WTC11 (cell line): ENCODE measurements at regions of chr5 and their contacts with region 1.

Region 1: GRCh38 chr5:923281-923873 is 30.7 kb downstream of the TRIP13 start:
- DNase-seq: peak; percentile 90
- ATAC-seq: peak; percentile 89
- H3K4me3 Mint-ChIP-seq: no peak overlapping the region
- H3K27ac Mint-ChIP-seq: no peak overlapping the region
- H3K4me1 Mint-ChIP-seq: peaks cover 5% of the 10 kb centered on the region; the same call in 1 of the 2 replicates
- H3K27me3 Mint-ChIP-seq: peaks cover 26% of the 10 kb centered on the region
- CTCF ChIP-seq: peak; percentile 75

Region 2: GRCh38 chr5:252546-252945 is 670.8 kb before region 1 on chr5:
- CTCF ChIA-PET with region 1: no interaction called
- POLR2A ChIA-PET with region 1: no interaction called
- DNase-seq: no peak
- ATAC-seq: no peak
- H3K4me3 Mint-ChIP-seq: no peak overlapping the region
- H3K27ac Mint-ChIP-seq: no peak overlapping the region
- H3K4me1 Mint-ChIP-seq: no peaks in the 10 kb centered on the region
- H3K27me3 Mint-ChIP-seq: no peaks in the 10 kb centered on the region
- CTCF ChIP-seq: no peak

Region 3: DNA sequence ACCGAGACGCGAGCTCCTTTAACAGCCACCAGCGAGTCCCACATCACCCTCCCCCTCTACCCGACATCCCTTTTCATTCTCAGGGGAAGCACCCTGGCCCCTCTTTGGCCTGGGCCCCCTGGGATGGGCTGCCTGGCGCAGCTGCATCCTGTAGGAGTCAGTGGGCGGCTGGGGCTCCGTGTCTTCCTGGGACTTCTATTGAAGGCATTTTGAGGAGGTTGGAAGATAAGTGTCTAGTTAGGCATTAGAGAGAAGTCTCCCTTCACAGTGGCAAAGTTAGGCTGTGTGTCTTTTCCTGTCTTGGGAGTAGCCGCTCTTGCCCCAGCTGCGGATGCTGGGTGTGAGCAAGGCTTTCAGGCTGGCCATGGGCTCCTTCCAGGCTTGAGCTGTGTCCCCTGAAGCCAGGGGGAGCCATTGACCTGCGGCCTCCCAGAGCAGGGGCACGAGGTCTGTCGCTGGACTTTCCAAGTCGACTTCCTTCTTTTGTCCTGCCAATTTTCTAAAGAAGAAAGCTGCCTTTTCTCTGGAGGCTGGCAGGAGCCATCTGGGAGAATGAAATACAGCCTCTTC is 66.7 kb after region 1 on chr5:
- CTCF ChIA-PET with region 1: interaction called, 14 read pairs
- POLR2A ChIA-PET with region 1: no interaction called
- DNase-seq: peak; percentile 62
- ATAC-seq: peak; percentile 88
- H3K4me3 Mint-ChIP-seq: no peak overlapping the region
- H3K27ac Mint-ChIP-seq: no peak overlapping the region
- H3K4me1 Mint-ChIP-seq: peaks cover 5% of the 10 kb centered on the region
- H3K27me3 Mint-ChIP-seq: peaks cover 6% of the 10 kb centered on the region
- CTCF ChIP-seq: no peak

Region 4: DNA sequence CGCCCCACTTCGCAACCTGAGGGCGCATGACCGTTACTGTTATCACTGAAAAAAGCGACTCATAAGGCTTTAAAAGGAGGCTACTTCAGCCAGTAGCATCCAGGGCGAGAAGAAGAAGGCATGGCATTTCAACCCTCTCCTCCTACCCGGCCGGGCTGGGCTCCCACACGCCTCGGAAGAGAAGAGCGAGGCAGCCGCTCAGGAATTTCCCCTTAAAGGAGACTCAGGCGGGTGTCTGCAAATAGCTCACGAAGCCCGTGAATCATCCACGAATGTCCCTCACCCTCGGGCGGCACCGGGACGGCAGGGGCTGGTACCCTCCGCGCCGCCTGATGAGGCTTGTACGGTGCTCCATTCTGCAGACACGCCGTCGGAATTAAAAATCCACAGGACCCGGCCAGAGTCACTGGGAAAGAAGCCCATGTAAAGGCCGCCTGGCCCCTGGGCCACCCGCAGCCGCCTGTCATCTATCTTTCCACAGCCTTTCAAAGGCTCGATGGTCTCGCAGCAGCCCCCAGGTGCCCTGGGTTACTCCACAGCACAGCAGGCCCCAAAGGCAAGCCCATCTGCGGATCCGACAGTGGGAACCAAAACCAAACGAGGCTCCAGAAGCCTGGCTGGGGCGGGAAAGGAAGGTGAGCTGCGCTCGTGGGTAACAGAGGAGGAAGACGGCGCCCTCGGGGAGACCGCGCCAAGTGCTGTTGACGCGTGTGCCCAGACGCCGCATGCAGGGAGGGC is 176.7 kb after region 1 on chr5:
- CTCF ChIA-PET with region 1: no interaction called
- POLR2A ChIA-PET with region 1: no interaction called
- DNase-seq: no peak
- ATAC-seq: no peak
- H3K4me3 Mint-ChIP-seq: no peak overlapping the region
- H3K27ac Mint-ChIP-seq: 0 out of 2 replicates have a peak overlapping the region, but pooled peaks have one; percentile 51
- H3K4me1 Mint-ChIP-seq: peaks cover 59% of the 10 kb centered on the region
- H3K27me3 Mint-ChIP-seq: no peaks in the 10 kb centered on the region
- CTCF ChIP-seq: no peak

Region 5: GRCh38 chr5:1167728-1168709 is 244.6 kb after region 1 on chr5:
- CTCF ChIA-PET with region 1: interaction called, 12 read pairs
- POLR2A ChIA-PET with region 1: no interaction called
- DNase-seq: peak; percentile 67
- ATAC-seq: peak; percentile 78
- H3K4me3 Mint-ChIP-seq: peak overlapping the region; percentile 72
- H3K27ac Mint-ChIP-seq: no peak overlapping the region
- H3K4me1 Mint-ChIP-seq: peaks cover 2% of the 10 kb centered on the region; the same call in 1 of the 2 replicates
- H3K27me3 Mint-ChIP-seq: no peaks in the 10 kb centered on the region
- CTCF ChIP-seq: peak; percentile 35

Region 6: DNA sequence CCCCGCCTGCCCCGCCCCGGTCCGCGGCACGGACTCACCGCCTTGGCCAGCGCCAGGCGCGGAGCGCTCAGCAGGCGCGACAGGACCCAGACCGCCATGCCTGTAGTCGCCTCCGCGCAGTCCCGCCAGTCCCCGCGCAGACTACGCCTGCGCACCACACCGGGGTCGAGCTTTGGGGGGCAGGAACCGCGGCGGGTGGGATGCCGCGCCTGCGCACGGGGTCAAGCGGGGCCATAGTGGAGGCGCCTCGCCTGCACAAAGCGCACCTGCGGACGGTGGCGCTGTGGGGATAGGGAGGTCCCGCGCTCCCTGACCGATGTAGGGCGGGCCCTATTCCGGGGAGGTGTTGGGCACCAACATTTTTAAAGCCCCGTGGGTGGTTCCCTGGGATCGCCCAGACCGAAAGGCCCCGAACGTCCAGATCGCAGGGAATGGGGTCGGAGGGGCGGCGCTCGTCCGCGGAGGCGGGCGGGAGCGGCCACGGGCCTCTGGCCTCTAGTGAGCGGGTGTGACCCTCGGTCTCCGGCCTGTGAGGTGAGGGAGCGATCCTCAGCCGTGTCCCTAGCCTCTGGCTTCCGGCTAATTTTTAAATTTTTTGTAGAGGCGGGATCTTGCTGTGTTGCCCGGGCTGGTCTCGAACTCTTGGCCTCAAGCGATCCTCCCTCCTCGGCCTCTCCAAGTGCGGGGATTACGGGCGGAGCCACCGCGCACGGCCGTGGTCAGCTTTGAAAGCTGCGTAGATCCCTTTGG is 671.2 kb after region 1 on chr5:
- CTCF ChIA-PET with region 1: no interaction called
- POLR2A ChIA-PET with region 1: no interaction called
- DNase-seq: peak; percentile 92
- ATAC-seq: peak; percentile 95
- H3K4me3 Mint-ChIP-seq: peak overlapping the region; percentile 64
- H3K27ac Mint-ChIP-seq: no peak overlapping the region
- H3K4me1 Mint-ChIP-seq: peaks cover 26% of the 10 kb centered on the region
- H3K27me3 Mint-ChIP-seq: no peaks in the 10 kb centered on the region
- CTCF ChIP-seq: no peak